ENCODE measurements at regions of chr11 and their contacts with region 1.

Region 1: DNA sequence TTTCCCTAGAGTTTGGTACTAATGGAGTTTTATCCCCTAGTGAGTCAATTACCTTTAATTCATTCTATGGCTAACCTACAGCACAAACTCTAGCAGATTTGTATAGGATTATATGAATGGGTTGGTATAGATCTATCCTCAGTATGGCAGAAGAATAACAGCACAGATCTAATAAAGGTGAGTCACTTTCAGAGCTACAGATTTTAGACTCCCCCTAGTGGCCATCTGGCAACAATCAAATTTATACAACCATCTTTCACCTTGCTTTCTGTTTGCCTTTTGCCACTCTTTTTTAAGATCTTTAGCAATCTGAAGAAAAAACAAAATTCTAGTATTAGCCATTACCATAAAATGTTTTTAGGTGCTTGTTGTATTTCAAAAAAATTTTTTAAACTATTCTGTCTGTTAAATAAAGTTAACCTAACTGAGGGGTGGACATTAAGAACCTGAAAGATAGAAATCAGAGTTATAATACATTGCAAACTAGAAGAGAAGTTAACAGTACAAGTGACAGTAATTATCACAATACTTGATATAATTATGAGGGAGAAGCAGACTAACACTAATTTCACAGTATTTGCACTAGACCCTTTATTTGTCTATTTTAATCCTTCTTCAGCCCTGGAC is 25.8 kb downstream of the DDIAS start:
- DNase-seq: no peak
- ATAC-seq: peak; percentile 57

Region 2: GRCh38 chr11:82978422-82979099 is 51.2 kb after region 1 on chr11:
- intact Hi-C with region 1: no loop called
- DNase-seq: no peak
- ATAC-seq: no peak

Region 3: DNA sequence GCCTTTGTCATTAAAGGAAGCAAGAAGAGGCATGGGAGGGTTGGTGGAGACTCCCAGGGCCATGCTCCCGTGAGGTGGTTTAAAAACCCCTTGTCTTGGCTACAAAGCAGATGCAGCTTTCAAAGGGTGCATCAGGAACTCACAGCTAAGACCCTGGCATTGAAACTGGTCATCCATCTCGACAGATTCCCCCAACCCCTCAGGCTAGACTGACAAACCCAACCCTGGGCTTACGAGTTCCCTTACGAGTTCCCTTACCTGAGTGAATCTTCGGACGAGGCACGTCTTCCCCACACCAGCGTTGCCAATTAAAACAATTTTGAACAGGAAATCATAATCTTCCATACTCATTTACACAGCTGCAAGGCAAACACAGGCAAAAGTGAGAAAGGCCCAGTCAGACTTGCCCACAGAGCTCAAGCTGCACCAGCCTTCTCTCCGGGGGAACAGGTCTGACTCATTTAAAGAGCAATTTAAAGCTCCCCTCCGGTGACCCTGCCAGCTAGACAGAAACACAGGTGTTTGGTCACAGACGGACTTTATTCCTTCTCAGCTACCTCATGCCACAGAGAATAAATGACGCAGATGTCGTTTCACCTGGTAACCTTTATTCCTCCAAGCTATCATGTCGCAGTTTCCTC is 69.7 kb after region 1 on chr11:
- intact Hi-C with region 1: no loop called
- DNase-seq: no peak
- ATAC-seq: no peak

Region 4: DNA sequence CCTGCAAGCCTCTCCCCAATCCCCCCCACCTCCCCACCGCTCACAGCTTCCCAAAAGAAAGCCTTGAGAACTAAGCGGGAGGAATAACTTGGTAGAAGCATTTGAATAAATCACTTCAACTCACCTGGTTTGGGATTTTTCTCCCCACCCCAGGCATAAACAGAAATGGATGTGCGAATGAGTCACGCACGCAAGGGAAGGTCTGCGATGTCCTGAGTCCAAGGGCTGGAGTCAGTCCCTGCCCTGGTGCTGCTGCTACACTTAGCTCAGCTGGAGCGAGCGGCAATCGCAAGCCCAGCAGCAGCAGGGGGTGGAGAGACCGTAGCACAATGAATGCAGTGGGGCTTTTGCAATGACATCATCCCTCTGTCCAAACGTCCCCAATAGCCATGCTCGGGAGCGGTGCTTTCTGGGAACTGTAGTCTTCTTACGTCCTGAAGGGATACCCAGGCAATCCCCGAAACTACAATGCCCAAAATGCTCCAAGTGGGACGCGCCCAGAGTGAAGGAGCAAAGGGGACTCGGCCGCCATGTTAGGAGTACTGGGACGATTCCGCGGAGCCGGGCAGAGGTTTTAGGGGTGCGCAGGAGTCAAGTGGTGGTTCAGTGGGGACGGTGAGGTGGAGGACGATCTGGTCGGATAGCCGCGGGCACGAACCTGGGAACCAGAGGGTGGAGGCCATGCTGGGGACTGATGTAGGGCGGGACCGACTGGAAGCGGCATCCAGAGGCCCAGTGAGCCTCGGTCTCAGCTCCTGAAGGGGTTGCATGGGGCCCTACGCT is 144.4 kb after region 1 on chr11 and contains the start of gene RAB30:
- intact Hi-C with region 1: loop called (anchors 10 kb)
- DNase-seq: peak; percentile 94
- ATAC-seq: peak; percentile 98
- total RNA-seq, gene RAB30: 24.2 TPM

Measured in Right ventricle myocardium superior (tissue), 1 donor.